ENCODE measurements at regions of chr12 and their contacts with region 1.

Region 1: GRCh38 chr12:49130151-49131050 is 794 bp downstream of the TUBA1B start:
- DNase-seq: peak; percentile 98
- H3K4me3 Mint-ChIP-seq: peak overlapping the region; percentile 98
- H3K27ac Mint-ChIP-seq: peak overlapping the region; percentile 99
- H3K4me1 Mint-ChIP-seq: peaks cover 36% of the 10 kb centered on the region
- H3K27me3 Mint-ChIP-seq: peaks cover 2% of the 10 kb centered on the region

Region 2: GRCh38 chr12:49060237-49061156 is 69.9 kb before region 1 on chr12 and contains the start of gene KMT2D:
- intact Hi-C with region 1: loop called (anchors 1 kb)
- DNase-seq: peak; percentile 96
- H3K4me3 Mint-ChIP-seq: peak within 1 kb of the TSS; percentile 98
- H3K27ac Mint-ChIP-seq: peak within 1 kb of the TSS; percentile 95
- H3K4me1 Mint-ChIP-seq: peaks cover 46% of the 10 kb centered on the region
- H3K27me3 Mint-ChIP-seq: no peaks in the 10 kb centered on the region
- total RNA-seq, gene KMT2D: 101 TPM in 2 replicates

Region 3: GRCh38 chr12:49088190-49088931 is 42.0 kb before region 1 on chr12:
- intact Hi-C with region 1: loop called (anchors 1 kb)
- DNase-seq: peak; percentile 92
- H3K4me3 Mint-ChIP-seq: peak overlapping the region; percentile 39
- H3K27ac Mint-ChIP-seq: no peak overlapping the region
- H3K4me1 Mint-ChIP-seq: peaks cover 40% of the 10 kb centered on the region
- H3K27me3 Mint-ChIP-seq: peaks cover 42% of the 10 kb centered on the region

Region 4: DNA sequence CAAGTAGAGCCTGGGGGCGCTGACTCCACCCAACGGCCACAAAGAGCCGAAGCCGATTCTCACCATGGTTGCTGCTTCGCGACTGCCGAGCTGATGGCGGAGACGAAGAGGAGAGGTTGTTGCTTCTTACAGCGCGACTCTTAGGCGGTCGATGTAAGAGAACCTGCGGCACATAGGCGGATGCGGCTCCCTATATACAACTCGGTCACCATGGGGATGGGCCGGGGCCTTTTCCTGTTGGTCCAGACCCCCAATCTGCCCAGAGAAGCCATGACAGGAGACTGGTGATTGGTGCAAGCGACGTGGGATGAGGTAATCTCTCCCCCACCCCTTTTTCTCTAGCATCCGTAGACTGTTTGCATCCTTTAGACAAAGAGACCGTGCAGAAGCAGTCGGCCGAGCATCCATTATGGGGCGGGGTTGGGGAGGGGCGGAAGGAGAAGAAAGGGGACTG is 58.5 kb after region 1 on chr12 and contains the start of gene TUBA1A:
- intact Hi-C with region 1: loop called (anchors 1 kb)
- DNase-seq: peak; percentile 98
- H3K4me3 Mint-ChIP-seq: peak within 1 kb of the TSS; percentile 93
- H3K27ac Mint-ChIP-seq: peak within 1 kb of the TSS; percentile 99
- H3K4me1 Mint-ChIP-seq: peaks cover 11% of the 10 kb centered on the region
- H3K27me3 Mint-ChIP-seq: peaks cover 9% of the 10 kb centered on the region
- total RNA-seq, gene TUBA1A: 45.9 and 46.8 TPM in 2 replicates

Region 5: DNA sequence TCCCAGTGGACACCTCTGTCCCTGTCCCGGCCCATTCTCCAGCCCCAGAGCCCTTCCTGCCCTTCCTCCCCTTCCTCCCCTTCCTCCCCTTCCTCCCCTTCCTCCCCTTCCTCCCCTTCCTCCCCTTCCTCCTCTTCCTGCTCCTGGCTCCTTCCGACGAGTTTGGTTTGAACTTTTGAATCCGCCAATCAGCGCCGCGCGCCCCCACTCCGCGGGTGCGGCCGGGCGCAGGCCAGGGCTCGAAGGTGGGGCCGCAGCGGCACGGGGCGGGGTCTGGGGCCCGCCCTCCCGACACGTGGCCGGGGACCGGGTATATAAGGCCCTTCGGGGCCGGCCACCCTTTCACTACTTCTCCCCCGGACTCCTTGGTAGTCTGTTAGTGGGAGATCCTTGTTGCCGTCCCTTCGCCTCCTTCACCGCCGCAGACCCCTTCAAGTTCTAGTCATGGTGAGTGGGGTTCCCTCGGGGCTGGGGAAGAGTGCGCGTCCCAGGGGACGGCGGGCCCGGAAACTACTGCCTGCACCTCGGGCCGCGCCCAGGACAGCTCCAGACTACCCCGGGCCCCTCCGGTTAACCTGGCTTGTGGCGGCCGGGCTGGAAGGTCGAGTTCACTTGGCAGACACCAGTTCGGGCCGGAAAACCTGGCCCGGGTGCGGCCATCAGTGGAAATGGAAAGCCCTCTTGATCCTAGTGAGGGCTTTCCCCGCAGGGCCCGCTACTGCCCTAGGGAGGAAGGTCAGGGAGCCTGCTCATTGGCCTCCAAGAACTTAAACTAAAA is 134.5 kb after region 1 on chr12 and contains the start of gene TUBA1C:
- intact Hi-C with region 1: loop called (anchors 2 kb)
- DNase-seq: peak; percentile 98
- H3K4me3 Mint-ChIP-seq: peak within 1 kb of the TSS; percentile 97
- H3K27ac Mint-ChIP-seq: peak within 1 kb of the TSS; percentile 100
- H3K4me1 Mint-ChIP-seq: peaks cover 43% of the 10 kb centered on the region
- H3K27me3 Mint-ChIP-seq: no peaks in the 10 kb centered on the region
- total RNA-seq, gene TUBA1C: 286 and 305 TPM in 2 replicates

Measured in activated CD4-positive, alpha-beta T cell treated with anti-CD3 and anti-CD28 coated beads, Interleukin-2, amount 10 ng/mL, durations not matched to agents 24 days and 14 days (primary cell).